ENCODE measurements at regions of chr5 and their contacts with region 1.

Region 1: DNA sequence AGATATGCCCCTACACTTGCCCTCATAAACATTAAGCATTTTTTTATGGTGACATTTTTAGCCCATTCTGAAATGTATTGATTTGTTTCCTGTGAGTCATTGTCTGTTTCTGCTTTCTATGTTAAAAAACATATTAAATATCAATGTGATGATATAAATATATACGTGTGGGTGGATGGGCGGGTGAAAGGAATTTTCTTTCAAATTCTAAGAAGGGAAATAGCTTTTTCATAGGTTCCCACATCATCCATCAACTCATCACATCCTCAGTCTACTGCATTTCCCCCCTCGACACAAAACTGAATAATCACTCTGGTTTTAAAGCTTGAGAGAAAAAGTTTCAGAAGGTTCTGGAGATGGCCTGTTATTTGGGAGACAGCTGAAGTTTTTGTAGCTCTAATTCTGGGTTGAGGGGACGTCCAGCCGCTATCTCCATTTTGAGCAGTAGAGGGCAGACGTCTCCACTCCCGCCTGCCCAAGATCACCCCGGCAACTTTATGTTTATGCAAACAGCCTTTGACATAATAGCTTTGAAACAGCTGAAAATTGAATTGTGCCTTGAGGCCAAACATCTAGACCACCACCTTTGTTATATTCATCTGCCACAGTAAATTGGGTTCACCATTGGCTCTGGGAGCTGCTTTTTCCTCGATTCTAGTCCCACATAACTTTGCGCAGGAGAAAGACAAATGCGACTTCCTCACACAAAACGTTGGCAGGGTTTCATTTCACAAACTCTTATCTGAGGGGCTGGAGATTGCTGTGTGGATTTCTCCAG is 216.2 kb upstream of the CLINT1 start:
- DNase-seq: peak in 4 of 5 donors; percentile 41 to 47 (median 46)
- H3K4me3 ChIP-seq: no peak overlapping the region
- H3K4me3 Mint-ChIP-seq: peak overlapping the region in 1 of 8 donors; percentile 29
- H3K27ac ChIP-seq: no peak overlapping the region
- H3K27ac Mint-ChIP-seq: peak overlapping the region in 4 of 7 donors; percentile 1 to 78 (median 44)
- H3K4me1 ChIP-seq: peaks cover 4% of the 10 kb centered on the region
- H3K4me1 Mint-ChIP-seq: peaks cover 0 to 5% (median 4%) of the 10 kb centered on the region in 4 donors
- H3K27me3 ChIP-seq: no peaks in the 10 kb centered on the region
- H3K27me3 Mint-ChIP-seq: peaks cover 0 to 7% of the 10 kb centered on the region in 2 donors

Region 2: GRCh38 chr5:157710872-157711271 is 364.3 kb before region 1 on chr5:
- CTCF ChIA-PET with region 1: no interaction called
- POLR2A ChIA-PET with region 1: no interaction called
- intact Hi-C with region 1: no loop called
- DNase-seq: no peak
- H3K4me3 ChIP-seq: no peak overlapping the region
- H3K4me3 Mint-ChIP-seq: no peak overlapping the region
- H3K27ac ChIP-seq: no peak overlapping the region
- H3K27ac Mint-ChIP-seq: no peak overlapping the region
- H3K4me1 ChIP-seq: no peaks in the 10 kb centered on the region
- H3K4me1 Mint-ChIP-seq: peaks cover 0 to 2% (median 0%) of the 10 kb centered on the region in 4 donors
- H3K27me3 ChIP-seq: no peaks in the 10 kb centered on the region
- H3K27me3 Mint-ChIP-seq: no peaks in the 10 kb centered on the region

Region 3: GRCh38 chr5:158058208-158059120 is 16.7 kb before region 1 on chr5:
- CTCF ChIA-PET with region 1: interaction called, 27 read pairs
- POLR2A ChIA-PET with region 1: no interaction called
- intact Hi-C with region 1: no loop called
- DNase-seq: no peak
- H3K4me3 ChIP-seq: no peak overlapping the region
- H3K4me3 Mint-ChIP-seq: no peak overlapping the region
- H3K27ac ChIP-seq: no peak overlapping the region
- H3K27ac Mint-ChIP-seq: no peak overlapping the region
- H3K4me1 ChIP-seq: no peaks in the 10 kb centered on the region
- H3K4me1 Mint-ChIP-seq: no peaks in the 10 kb centered on the region
- H3K27me3 ChIP-seq: no peaks in the 10 kb centered on the region
- H3K27me3 Mint-ChIP-seq: peaks cover 12 to 18% of the 10 kb centered on the region in 2 donors

Region 4: DNA sequence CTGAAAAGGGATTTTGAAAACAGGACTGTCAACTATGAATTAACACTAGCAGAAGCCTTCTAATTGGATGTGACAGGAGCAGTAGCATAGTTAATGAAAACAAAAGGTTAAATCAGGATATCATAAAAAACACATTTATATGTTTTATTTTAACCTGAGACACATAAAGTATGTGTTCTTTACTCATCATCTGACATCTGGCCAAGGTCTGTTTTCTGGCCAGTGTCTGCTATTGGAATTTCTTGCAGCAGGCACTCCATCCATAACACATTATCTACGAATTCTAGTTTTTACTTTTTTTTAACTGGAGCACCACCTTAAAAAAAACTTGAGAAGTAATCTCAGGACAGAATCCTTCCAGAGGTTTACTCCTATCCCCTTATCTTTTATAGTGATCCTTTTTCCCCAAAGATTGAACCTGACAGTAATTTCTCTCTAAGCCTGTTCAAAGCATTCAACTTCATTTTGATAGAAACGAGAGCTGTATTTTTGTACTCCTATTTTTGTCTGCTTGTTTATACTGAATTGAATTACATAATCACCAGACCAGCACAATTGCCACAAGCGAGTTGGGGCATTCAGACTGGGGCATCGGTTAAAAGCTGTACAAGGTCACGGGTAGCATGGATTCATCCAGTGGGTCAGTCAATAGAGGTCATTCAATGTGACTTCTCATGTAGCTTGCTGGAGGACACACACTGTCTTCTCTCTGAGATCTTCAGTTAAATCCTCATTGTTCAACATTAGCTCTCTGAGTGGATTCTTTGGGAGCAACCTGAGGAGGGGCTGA is 10.7 kb before region 1 on chr5:
- CTCF ChIA-PET with region 1: interaction called, 27 read pairs
- POLR2A ChIA-PET with region 1: no interaction called
- intact Hi-C with region 1: no loop called
- DNase-seq: no peak
- H3K4me3 ChIP-seq: no peak overlapping the region
- H3K4me3 Mint-ChIP-seq: no peak overlapping the region
- H3K27ac ChIP-seq: no peak overlapping the region
- H3K27ac Mint-ChIP-seq: no peak overlapping the region
- H3K4me1 ChIP-seq: no peaks in the 10 kb centered on the region
- H3K4me1 Mint-ChIP-seq: no peaks in the 10 kb centered on the region
- H3K27me3 ChIP-seq: no peaks in the 10 kb centered on the region
- H3K27me3 Mint-ChIP-seq: peaks cover 2 to 16% of the 10 kb centered on the region in 2 donors